MCF 10A (cell line): ENCODE measurements at regions of chr4 and their contacts with region 1.

Region 1: DNA sequence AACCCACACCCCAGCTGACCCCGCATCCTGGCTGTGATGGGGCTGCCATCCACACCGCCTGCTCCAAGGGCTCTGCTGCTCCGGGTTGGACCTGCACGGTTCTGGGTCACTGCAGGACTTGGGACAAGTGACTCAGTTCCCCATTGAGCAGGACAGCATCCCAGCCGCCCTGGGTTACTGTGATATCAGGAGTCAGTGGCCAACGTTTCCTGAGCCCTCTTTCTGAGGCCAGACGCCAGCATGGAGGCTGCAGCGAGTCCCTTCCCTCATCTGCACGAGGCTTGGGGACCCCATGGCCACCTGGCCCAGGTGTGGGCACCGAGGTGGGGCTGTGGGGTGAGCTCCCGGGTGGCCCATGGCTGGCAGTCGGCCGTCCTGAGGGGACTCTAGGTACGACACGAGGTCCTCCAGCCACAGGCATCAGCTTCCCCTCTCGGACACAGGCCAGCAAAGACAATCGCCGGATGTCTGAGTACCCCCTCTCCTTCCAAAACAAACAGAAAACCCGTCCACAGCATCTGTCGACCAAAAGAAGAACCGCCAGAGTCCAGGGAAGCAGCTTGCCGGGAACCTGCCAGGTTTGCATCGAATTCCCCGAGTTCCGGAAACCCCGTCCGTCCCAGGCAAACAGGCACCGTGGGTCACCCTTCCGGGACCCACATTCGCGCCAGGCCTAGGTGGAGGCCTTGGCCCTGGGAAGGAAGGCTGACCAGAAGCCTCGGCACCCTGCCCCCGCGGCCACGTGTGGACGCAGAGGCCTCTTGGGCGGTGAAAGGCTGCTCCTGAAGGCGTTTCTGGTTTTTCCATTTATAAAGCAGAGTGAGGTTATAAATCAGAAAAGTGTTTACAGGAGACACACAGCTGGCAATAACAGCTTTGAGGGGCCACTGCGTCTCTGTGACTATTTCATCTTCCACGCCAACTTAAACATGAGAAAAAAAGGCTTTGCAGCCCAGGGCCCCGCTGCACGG is 136.0 kb downstream of the FAM53A start:
- DNase-seq: no peak
- H3K4me3 Mint-ChIP-seq: no peak overlapping the region
- H3K27ac Mint-ChIP-seq: no peak overlapping the region
- H3K4me1 Mint-ChIP-seq: no peaks in the 10 kb centered on the region
- H3K27me3 Mint-ChIP-seq: peaks cover 12% of the 10 kb centered on the region
- CTCF ChIP-seq: no peak

Region 2: GRCh38 chr4:1277667-1278335 is 270.3 kb before region 1 on chr4:
- CTCF ChIA-PET with region 1: no interaction called
- POLR2A ChIA-PET with region 1: no interaction called
- intact Hi-C with region 1: loop called (anchors 5 kb)
- DNase-seq: peak; percentile 24
- H3K4me3 Mint-ChIP-seq: no peak overlapping the region
- H3K27ac Mint-ChIP-seq: no peak overlapping the region
- H3K4me1 Mint-ChIP-seq: peaks cover 9% of the 10 kb centered on the region
- H3K27me3 Mint-ChIP-seq: peaks cover 10% of the 10 kb centered on the region
- CTCF ChIP-seq: no peak

Region 3: GRCh38 chr4:1654216-1654955 is 106.2 kb after region 1 on chr4:
- CTCF ChIA-PET with region 1: no interaction called
- POLR2A ChIA-PET with region 1: no interaction called
- intact Hi-C with region 1: no loop called
- DNase-seq: no peak
- H3K4me3 Mint-ChIP-seq: no peak overlapping the region
- H3K27ac Mint-ChIP-seq: no peak overlapping the region
- H3K4me1 Mint-ChIP-seq: no peaks in the 10 kb centered on the region
- H3K27me3 Mint-ChIP-seq: no peaks in the 10 kb centered on the region
- CTCF ChIP-seq: no peak

Region 4: GRCh38 chr4:1752284-1753041 is 204.3 kb after region 1 on chr4:
- CTCF ChIA-PET with region 1: no interaction called
- POLR2A ChIA-PET with region 1: no interaction called
- intact Hi-C with region 1: no loop called
- DNase-seq: peak; percentile 70
- H3K4me3 Mint-ChIP-seq: no peak overlapping the region
- H3K27ac Mint-ChIP-seq: no peak overlapping the region
- H3K4me1 Mint-ChIP-seq: no peaks in the 10 kb centered on the region
- H3K27me3 Mint-ChIP-seq: no peaks in the 10 kb centered on the region
- CTCF ChIP-seq: no peak

Region 5: DNA sequence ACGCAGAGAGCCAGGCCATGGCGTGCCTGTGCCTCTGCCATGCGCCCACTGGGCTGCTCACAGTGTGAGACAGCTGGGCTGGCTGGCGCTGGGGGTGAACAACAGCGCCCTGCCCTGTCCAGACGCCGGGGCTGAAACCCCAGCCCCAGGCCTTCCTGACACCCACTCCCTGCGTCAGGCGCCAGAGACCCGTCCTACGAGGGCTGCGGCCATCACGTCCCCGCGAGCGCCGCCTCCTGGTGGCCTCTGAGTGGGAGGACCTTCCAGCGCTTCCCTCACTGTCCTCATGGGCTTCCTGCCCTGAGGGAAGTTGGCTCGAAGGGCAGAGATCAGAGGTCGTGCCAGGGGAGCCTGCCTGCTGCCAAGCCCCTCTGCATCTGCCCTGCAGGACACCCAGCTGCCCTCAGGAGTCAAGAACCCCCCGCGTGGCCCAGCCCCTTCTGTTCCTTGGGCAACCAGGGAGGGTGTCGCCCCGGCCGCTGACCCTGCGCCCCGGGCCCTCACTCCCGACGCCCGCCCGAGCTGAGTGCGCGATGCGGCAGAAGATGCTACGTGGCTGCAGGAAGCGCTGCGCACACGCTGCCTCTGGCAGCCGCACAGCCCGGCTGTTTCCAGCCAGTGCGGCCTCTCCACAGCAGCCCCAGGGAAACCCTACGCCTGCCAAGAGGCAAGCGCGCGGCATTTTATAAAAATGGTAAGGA is 444.5 kb after region 1 on chr4:
- CTCF ChIA-PET with region 1: no interaction called
- POLR2A ChIA-PET with region 1: no interaction called
- intact Hi-C with region 1: no loop called
- DNase-seq: no peak
- H3K4me3 Mint-ChIP-seq: peak overlapping the region; percentile 31
- H3K27ac Mint-ChIP-seq: no peak overlapping the region
- H3K4me1 Mint-ChIP-seq: no peaks in the 10 kb centered on the region
- H3K27me3 Mint-ChIP-seq: no peaks in the 10 kb centered on the region
- CTCF ChIP-seq: no peak